ENCODE measurements at regions of chr12 and their contacts with region 1.

Region 1: GRCh38 chr12:61891632-61892031 is 368.6 kb upstream of the USP15 start:
- DNase-seq: no peak
- H3K4me3 ChIP-seq: no peak overlapping the region
- H3K27ac ChIP-seq: no peak overlapping the region
- H3K4me1 ChIP-seq: no peaks in the 10 kb centered on the region
- H3K27me3 ChIP-seq: no peaks in the 10 kb centered on the region
- CTCF ChIP-seq: no peak
- EP300 ChIP-seq: no peak
- POLR2A ChIP-seq: no peak

Region 2: GRCh38 chr12:61758661-61759060 is 133.0 kb before region 1 on chr12:
- intact Hi-C with region 1: no loop called
- DNase-seq: no peak
- H3K4me3 ChIP-seq: no peak overlapping the region
- H3K27ac ChIP-seq: no peak overlapping the region
- H3K4me1 ChIP-seq: no peaks in the 10 kb centered on the region
- H3K27me3 ChIP-seq: no peaks in the 10 kb centered on the region
- CTCF ChIP-seq: no peak
- EP300 ChIP-seq: no peak
- POLR2A ChIP-seq: no peak

Region 3: DNA sequence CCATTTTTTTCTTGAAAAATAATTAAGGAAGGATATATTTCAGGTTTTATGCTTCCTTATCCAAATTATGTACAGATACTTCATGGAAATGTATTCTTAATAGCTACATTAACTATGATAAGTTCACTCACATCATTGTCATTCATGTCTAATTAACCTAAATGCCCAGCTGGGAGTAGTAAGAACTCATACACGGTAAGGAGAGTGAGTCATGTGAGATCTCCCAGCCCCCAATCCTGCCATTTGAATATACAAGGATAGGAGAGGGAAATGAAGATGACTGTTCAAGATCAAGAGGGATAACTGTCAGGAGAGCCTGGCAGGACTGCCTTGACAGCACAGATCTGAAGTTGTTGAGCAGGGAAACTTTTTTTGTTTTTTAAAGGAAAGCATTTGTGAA is 25.2 kb after region 1 on chr12:
- intact Hi-C with region 1: no loop called
- DNase-seq: no peak
- H3K4me3 ChIP-seq: no peak overlapping the region
- H3K27ac ChIP-seq: no peak overlapping the region
- H3K4me1 ChIP-seq: no peaks in the 10 kb centered on the region
- H3K27me3 ChIP-seq: no peaks in the 10 kb centered on the region
- CTCF ChIP-seq: no peak
- EP300 ChIP-seq: no peak
- POLR2A ChIP-seq: no peak

Region 4: DNA sequence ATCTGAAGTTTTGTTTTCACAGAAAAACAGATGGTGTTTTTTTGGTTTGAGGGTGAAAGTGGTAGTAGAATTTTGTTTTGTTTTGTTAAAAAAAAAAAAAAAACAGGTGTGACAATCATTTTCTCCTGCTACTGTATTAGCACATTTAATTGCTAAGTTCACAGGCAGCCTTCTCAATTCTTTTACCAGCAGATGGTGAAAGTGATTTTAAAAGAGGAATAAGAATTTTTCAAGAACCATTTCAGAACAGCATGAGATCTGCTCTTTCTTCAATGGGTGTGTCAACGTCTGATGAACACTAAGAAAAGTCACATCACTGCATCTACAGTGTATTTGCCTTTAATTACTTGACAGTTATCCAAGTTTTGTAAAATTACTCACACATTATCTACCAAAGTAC is 64.9 kb after region 1 on chr12:
- intact Hi-C with region 1: no loop called
- DNase-seq: no peak
- H3K4me3 ChIP-seq: no peak overlapping the region
- H3K27ac ChIP-seq: no peak overlapping the region
- H3K4me1 ChIP-seq: no peaks in the 10 kb centered on the region
- H3K27me3 ChIP-seq: no peaks in the 10 kb centered on the region
- CTCF ChIP-seq: no peak
- EP300 ChIP-seq: no peak
- POLR2A ChIP-seq: no peak

Region 5: DNA sequence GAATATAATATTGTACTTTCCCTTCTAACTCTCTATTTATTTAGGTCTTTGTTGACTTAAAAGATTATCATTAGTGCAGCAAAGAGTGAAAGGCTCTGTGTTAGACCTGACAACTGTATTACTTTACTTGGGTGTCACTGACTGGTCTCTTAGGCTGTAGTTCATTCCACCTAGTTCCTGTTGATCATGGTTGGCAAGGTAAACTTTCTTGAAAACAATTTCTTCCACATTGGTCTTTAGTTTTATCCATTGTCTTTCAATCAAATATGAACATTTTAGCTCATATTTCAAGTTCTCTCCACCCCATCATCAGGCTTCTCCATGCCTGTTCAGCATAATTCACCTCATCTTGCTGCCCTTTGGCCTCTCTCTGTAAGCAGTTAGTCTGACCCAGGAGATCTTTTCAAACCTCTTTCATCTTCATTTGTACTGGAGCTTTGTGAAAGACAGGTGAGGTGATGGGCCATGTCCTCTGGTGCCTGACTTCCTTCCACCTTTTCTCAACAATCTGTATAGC is 1075.4 kb after region 1 on chr12:
- intact Hi-C with region 1: loop called (anchors 10 kb)
- DNase-seq: no peak
- H3K4me3 ChIP-seq: no peak overlapping the region
- H3K27ac ChIP-seq: no peak overlapping the region
- H3K4me1 ChIP-seq: no peaks in the 10 kb centered on the region
- H3K27me3 ChIP-seq: no peaks in the 10 kb centered on the region
- CTCF ChIP-seq: no peak
- EP300 ChIP-seq: no peak
- POLR2A ChIP-seq: no peak

Measured in sigmoid colon (tissue), 7 donors.